ENCODE measurements at regions of chr12 and their contacts with region 1.

Region 1: GRCh38 chr12:19744734-19745218 is 305.5 kb downstream of the AEBP2 start:
- DNase-seq: no peak
- H3K4me3 ChIP-seq: no peak overlapping the region
- H3K27ac ChIP-seq: no peak overlapping the region
- H3K4me1 ChIP-seq: no peaks in the 10 kb centered on the region
- H3K27me3 ChIP-seq: peaks cover 4% of the 10 kb centered on the region
- CTCF ChIP-seq: no peak

Region 2: GRCh38 chr12:19045426-19045825 is 699.4 kb before region 1 on chr12:
- CTCF ChIA-PET with region 1: no interaction called
- dilution Hi-C with region 1: no loop called
- in situ Hi-C with region 1: no loop called
- intact Hi-C with region 1: no loop called
- DNase-seq: no peak
- H3K4me3 ChIP-seq: no peak overlapping the region
- H3K27ac ChIP-seq: no peak overlapping the region
- H3K4me1 ChIP-seq: no peaks in the 10 kb centered on the region
- H3K27me3 ChIP-seq: no peaks in the 10 kb centered on the region
- CTCF ChIP-seq: no peak

Region 3: GRCh38 chr12:19800884-19801283 is 56.1 kb after region 1 on chr12:
- CTCF ChIA-PET with region 1: no interaction called
- dilution Hi-C with region 1: no loop called
- in situ Hi-C with region 1: no loop called
- intact Hi-C with region 1: no loop called
- DNase-seq: peak; percentile 64
- H3K4me3 ChIP-seq: no peak overlapping the region
- H3K27ac ChIP-seq: no peak overlapping the region
- H3K4me1 ChIP-seq: peaks cover 10% of the 10 kb centered on the region
- H3K27me3 ChIP-seq: no peaks in the 10 kb centered on the region
- CTCF ChIP-seq: no peak

Region 4: GRCh38 chr12:19833775-19834501 is 89.2 kb after region 1 on chr12:
- CTCF ChIA-PET with region 1: no interaction called
- dilution Hi-C with region 1: no loop called
- in situ Hi-C with region 1: no loop called
- intact Hi-C with region 1: no loop called
- DNase-seq: peak; percentile 52
- H3K4me3 ChIP-seq: no peak overlapping the region
- H3K27ac ChIP-seq: no peak overlapping the region
- H3K4me1 ChIP-seq: no peaks in the 10 kb centered on the region
- H3K27me3 ChIP-seq: no peaks in the 10 kb centered on the region
- CTCF ChIP-seq: peak in 1 of 2 donors; percentile 6

Region 5: GRCh38 chr12:20463913-20464524 is 719.2 kb after region 1 on chr12:
- CTCF ChIA-PET with region 1: no interaction called
- dilution Hi-C with region 1: no loop called
- in situ Hi-C with region 1: no loop called
- intact Hi-C with region 1: loop called (anchors 5 kb)
- DNase-seq: no peak
- H3K4me3 ChIP-seq: no peak overlapping the region
- H3K27ac ChIP-seq: no peak overlapping the region
- H3K4me1 ChIP-seq: no peaks in the 10 kb centered on the region
- H3K27me3 ChIP-seq: no peaks in the 10 kb centered on the region
- CTCF ChIP-seq: peak; percentile 50 to 61

Measured in mammary epithelial cell (primary cell).